ENCODE measurements at regions of chr7 and their contacts with region 1.

Region 1: GRCh38 chr7:11120068-11120664 is 146.5 kb downstream of the PHF14 start:
- DNase-seq: no peak
- H3K4me3 ChIP-seq: no peak overlapping the region
- H3K27ac ChIP-seq: no peak overlapping the region
- H3K4me1 ChIP-seq: no peaks in the 10 kb centered on the region
- H3K27me3 ChIP-seq: no peaks in the 10 kb centered on the region
- CTCF ChIP-seq: no peak
- POLR2A ChIP-seq: no peak

Region 2: DNA sequence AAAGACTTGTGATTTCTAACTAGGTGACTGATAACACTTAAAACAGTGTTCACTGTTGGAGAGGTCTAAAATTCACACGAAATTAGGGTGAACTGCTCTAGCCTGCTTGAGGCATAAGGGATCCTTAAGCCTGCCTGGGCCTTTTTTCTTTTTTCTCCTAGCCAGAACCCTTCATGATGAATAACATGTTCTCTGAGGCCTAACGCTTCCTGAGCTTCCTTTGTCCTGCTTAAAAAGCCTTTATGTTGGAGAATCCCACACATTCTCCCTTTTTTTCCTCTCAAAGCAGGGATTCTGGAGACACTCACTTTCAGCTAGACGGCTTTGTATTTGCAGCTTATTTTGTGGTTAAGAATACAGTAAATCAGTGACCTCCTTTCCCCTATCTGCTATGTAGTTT is 501.2 kb before region 1 on chr7:
- intact Hi-C with region 1: loop called (anchors 5 kb)
- DNase-seq: no peak
- H3K4me3 ChIP-seq: no peak overlapping the region
- H3K27ac ChIP-seq: no peak overlapping the region
- H3K4me1 ChIP-seq: no peaks in the 10 kb centered on the region
- H3K27me3 ChIP-seq: no peaks in the 10 kb centered on the region
- CTCF ChIP-seq: no peak
- POLR2A ChIP-seq: no peak

Region 3: DNA sequence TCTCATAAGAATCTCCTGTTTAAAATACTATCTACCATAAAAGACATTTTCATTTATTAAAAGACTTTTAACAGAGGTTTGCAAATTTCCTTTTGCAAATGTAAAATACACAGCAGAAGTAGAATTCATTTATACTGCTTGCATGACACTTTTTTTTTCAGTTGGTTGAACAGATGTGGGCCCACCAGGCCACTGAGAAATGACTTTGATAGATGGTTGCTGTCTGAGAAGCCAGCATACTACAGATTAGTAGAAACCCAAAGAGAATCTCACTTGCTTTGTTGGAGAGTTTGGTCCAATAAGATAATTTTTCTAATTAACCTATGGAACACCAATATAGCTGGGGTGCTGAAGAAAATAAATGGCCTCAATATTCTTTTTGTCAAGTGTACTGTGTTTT is 80.2 kb before region 1 on chr7:
- intact Hi-C with region 1: no loop called
- DNase-seq: no peak
- H3K4me3 ChIP-seq: no peak overlapping the region
- H3K27ac ChIP-seq: no peak overlapping the region
- H3K4me1 ChIP-seq: no peaks in the 10 kb centered on the region
- H3K27me3 ChIP-seq: no peaks in the 10 kb centered on the region
- CTCF ChIP-seq: no peak
- POLR2A ChIP-seq: no peak

Region 4: GRCh38 chr7:11193131-11193811 is 73.1 kb after region 1 on chr7:
- intact Hi-C with region 1: no loop called
- DNase-seq: no peak
- H3K4me3 ChIP-seq: peak overlapping the region; percentile 34 to 55 (median 42)
- H3K27ac ChIP-seq: peak overlapping the region in 1 of 2 donors; percentile 33
- H3K4me1 ChIP-seq: no peaks in the 10 kb centered on the region
- H3K27me3 ChIP-seq: no peaks in the 10 kb centered on the region
- CTCF ChIP-seq: no peak
- POLR2A ChIP-seq: no peak

Region 5: GRCh38 chr7:11706666-11707605 is 586.8 kb after region 1 on chr7:
- intact Hi-C with region 1: no loop called
- DNase-seq: no peak
- H3K4me3 ChIP-seq: no peak overlapping the region
- H3K27ac ChIP-seq: no peak overlapping the region
- H3K4me1 ChIP-seq: no peaks in the 10 kb centered on the region
- H3K27me3 ChIP-seq: no peaks in the 10 kb centered on the region
- CTCF ChIP-seq: no peak
- POLR2A ChIP-seq: no peak